ENCODE measurements at regions of chr14 and their contacts with region 1.

Region 1: GRCh38 chr14:60724137-60724619 is at the start of gene SIX4:
- DNase-seq: peak; percentile 78
- ATAC-seq: peak; percentile 82
- H3K4me3 ChIP-seq: peak within 1 kb of the TSS; percentile 77 to 79
- H3K27ac ChIP-seq: peak within 1 kb of the TSS; percentile 88
- H3K4me1 ChIP-seq: peaks cover 17 to 18% of the 10 kb centered on the region in 2 experiments
- H3K27me3 ChIP-seq: no peaks in the 10 kb centered on the region
- CTCF ChIP-seq: no peak
- POLR2A ChIP-seq: peak; percentile 94
- RAD21 ChIP-seq: no peak
- total RNA-seq, gene SIX4: 24.5 TPM

Region 2: DNA sequence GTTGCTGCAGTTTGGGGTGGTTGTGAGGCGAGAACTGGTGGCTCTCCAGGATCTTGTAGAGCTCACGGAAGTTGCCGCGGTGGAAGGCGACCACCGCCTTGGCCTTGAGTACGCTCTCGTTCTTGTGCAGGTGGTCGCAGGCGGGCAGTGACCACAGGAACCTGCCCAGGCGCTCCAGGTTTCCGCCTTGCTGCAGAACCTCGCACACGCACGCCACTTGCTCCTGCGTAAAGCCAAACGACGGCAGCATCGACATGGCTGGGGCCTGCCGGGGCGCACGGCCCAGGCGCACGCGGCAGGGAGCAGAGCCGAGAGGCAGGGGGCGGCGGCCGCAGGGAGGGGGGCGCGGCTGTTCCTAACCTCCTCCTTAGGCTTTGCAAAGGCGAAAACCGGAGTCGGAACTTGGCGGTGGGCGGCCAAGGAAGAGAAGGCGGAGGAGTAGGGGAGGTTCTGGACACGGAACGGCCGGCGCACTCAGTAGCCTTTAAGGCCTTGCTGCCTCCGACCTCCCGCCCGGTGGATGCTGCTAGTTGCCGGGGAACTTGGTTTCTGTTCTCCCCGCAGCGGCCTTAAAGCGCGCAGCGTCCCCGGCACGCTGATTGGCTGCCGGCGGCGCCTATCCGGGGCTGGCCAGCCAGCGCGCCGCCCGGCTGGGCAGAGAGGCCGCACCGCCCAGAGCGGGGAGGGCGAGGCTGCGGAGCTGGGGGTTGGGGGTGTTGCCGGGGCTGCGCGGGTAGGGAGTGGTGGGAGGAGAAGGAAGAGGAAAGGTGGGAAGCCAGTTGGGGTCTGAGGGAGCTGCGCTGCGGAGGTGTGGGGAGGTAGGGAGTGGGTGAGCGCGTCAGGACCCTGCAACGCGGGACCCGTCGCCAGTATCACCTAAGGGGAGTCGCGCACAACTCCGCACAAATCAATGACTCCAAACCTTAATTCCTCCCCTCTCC is 75.0 kb before region 1 on chr14 and contains the start of gene SIX1:
- CTCF ChIA-PET with region 1: no interaction called
- POLR2A ChIA-PET with region 1: no interaction called
- RAD21 ChIA-PET with region 1: no interaction called
- intact Hi-C with region 1: loop called (anchors 5 kb)
- DNase-seq: peak; percentile 62
- ATAC-seq: peak; percentile 98
- H3K4me3 ChIP-seq: peak within 1 kb of the TSS; percentile 50 to 70
- H3K27ac ChIP-seq: peak within 1 kb of the TSS; percentile 46
- H3K4me1 ChIP-seq: peaks cover 3 to 22% of the 10 kb centered on the region in 2 experiments; a peak in 2 of 4 replicates
- H3K27me3 ChIP-seq: peaks cover 16% of the 10 kb centered on the region; the same call in 1 of the 2 replicates
- CTCF ChIP-seq: no peak
- POLR2A ChIP-seq: peak; percentile 37
- RAD21 ChIP-seq: no peak
- total RNA-seq, gene SIX1: 2.5 TPM

Region 3: GRCh38 chr14:60845523-60845922 is 121.3 kb after region 1 on chr14:
- CTCF ChIA-PET with region 1: no interaction called
- POLR2A ChIA-PET with region 1: no interaction called
- RAD21 ChIA-PET with region 1: no interaction called
- intact Hi-C with region 1: no loop called
- DNase-seq: no peak
- ATAC-seq: no peak
- H3K4me3 ChIP-seq: no peak overlapping the region
- H3K27ac ChIP-seq: no peak overlapping the region
- H3K4me1 ChIP-seq: no peaks in the 10 kb centered on the region
- H3K27me3 ChIP-seq: no peaks in the 10 kb centered on the region
- CTCF ChIP-seq: no peak
- POLR2A ChIP-seq: no peak
- RAD21 ChIP-seq: no peak

Region 4: GRCh38 chr14:60862286-60862685 is 138.1 kb after region 1 on chr14:
- CTCF ChIA-PET with region 1: no interaction called
- POLR2A ChIA-PET with region 1: no interaction called
- RAD21 ChIA-PET with region 1: no interaction called
- intact Hi-C with region 1: no loop called
- DNase-seq: no peak
- ATAC-seq: no peak
- H3K4me3 ChIP-seq: no peak overlapping the region
- H3K27ac ChIP-seq: no peak overlapping the region
- H3K4me1 ChIP-seq: peaks cover 6 to 10% of the 10 kb centered on the region in 2 experiments; a peak in 3 of 4 replicates
- H3K27me3 ChIP-seq: no peaks in the 10 kb centered on the region
- CTCF ChIP-seq: no peak
- POLR2A ChIP-seq: no peak
- RAD21 ChIP-seq: no peak

Region 5: DNA sequence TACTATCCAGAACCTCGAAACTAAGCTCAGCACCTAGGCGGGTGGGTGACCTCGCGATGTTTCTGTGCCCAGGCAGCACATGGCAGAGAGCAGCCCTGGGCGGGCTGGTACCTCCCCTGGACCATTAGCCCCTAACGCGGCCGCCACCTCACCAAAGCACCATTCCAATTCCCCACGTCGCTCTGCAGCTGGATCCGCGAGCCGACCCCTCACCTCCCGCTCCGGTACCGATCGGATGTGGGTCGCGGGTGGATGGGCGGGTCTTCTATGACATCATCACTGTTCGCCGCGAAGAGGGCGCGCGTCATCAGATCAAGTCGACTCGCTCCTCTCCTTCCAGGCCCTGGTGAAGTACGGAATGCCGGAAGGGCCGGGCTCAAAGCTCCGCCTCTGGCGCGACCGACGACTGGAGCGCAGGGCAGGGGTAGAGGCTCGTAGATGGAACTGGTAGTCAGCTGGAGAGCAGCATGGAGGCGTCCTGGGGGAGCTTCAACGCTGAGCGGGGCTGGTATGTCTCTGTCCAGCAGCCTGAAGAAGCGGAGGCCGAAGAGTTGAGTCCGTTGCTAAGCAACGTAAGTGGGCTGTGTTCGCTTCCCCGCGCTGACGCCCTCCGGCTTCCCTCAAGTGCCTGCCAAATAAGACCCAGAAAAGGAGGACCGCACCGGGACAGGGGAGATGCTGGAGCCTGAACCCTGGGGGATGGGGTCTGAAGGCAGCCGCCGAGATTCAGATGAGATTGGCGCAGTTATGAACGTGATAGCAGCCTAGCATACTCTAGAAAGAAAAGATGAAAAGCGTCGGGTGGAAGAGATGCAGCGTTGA is 256.8 kb after region 1 on chr14 and contains the starts of genes SLC38A6 and TRMT5:
- CTCF ChIA-PET with region 1: no interaction called
- POLR2A ChIA-PET with region 1: no interaction called
- RAD21 ChIA-PET with region 1: no interaction called
- intact Hi-C with region 1: loop called (anchors 2 kb)
- DNase-seq: peak; percentile 89
- ATAC-seq: peak; percentile 96
- H3K4me3 ChIP-seq: peak within 1 kb of the TSS; percentile 84 to 87
- H3K27ac ChIP-seq: peak within 1 kb of the TSS; percentile 56
- H3K4me1 ChIP-seq: peaks cover 5 to 21% of the 10 kb centered on the region in 2 experiments; a peak in 3 of 4 replicates
- H3K27me3 ChIP-seq: no peaks in the 10 kb centered on the region
- CTCF ChIP-seq: no peak
- POLR2A ChIP-seq: peak; percentile 74
- RAD21 ChIP-seq: peak; percentile 32; the same call in 1 of the 2 replicates
- total RNA-seq, gene SLC38A6: 9.5 TPM
- total RNA-seq, gene TRMT5: 23.7 TPM